ENCODE measurements at regions of chr15 and their contacts with region 1.

Region 1: DNA sequence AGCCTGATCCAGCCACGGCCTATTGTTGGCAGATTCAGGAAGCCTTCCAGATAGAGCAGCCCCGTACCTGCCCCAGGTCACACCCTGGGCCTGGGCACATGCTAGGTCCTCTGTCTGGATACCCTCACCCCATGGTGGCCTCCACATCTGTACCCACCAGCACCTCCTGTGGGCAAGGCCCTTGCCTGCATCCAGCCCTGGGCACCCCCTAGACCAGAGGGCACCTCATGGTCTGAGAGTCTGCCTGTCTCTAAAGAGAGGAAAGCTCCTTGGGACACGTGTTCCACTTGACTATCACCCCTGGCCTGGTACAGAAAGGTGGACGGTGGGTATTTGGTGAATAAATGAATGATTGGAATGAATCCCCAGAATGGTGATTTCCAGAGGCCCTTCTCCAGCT is 8.9 kb upstream of the COMMD4 start:
- DNase-seq: no peak
- H3K4me3 ChIP-seq: no peak overlapping the region
- H3K27ac ChIP-seq: no peak overlapping the region
- H3K4me1 ChIP-seq: no peaks in the 10 kb centered on the region
- H3K27me3 ChIP-seq: no peaks in the 10 kb centered on the region
- CTCF ChIP-seq: peak; percentile 25 to 47 (median 27); a peak in 2 of 4 replicates
- EP300 ChIP-seq: no peak
- POLR2A ChIP-seq: no peak
- RAD21 ChIP-seq: no peak

Region 2: GRCh38 chr15:75307778-75308391 is 19.1 kb before region 1 on chr15:
- CTCF ChIA-PET with region 1: interaction called, 12 read pairs
- POLR2A ChIA-PET with region 1: interaction called, 3 read pairs
- DNase-seq: peak; percentile 60 to 88
- H3K4me3 ChIP-seq: no peak overlapping the region
- H3K27ac ChIP-seq: no peak overlapping the region
- H3K4me1 ChIP-seq: no peaks in the 10 kb centered on the region
- H3K27me3 ChIP-seq: no peaks in the 10 kb centered on the region
- CTCF ChIP-seq: peak; percentile 94 to 95 (median 95)
- EP300 ChIP-seq: no peak
- POLR2A ChIP-seq: no peak
- RAD21 ChIP-seq: peak; percentile 98 to 99

Region 3: DNA sequence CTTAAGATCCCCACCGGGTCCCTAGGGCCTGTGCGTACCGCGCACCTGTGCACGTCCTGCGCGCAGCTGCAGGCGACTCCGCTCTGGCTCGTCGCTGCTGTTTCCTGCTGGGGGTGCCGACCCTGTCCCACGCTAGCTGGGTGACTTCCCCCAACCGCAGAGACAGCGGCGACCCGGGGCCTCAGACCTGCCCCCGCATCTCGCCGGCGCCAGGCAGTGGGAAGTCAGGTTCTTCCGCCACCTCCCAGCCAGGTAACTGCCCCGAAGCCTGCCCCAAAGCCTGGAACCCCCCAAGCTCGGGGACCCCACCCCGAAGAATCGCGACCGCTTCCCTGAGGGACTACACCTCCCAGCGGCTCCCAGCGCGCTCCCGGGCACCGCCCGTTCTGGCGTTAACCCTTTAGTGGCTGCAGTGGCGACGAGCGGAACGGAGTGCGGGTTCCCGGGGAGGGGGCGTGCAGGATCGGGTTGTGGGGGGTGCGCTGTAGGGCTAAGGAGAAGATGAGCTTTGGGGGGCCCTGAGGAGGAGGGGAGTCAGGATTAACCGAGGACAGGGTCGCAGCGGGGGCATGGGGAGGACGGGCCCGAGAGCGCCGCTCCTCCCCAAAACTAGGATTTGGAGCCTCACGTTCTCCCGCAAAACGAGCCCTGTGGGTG is 20.3 kb after region 1 on chr15:
- CTCF ChIA-PET with region 1: no interaction called
- POLR2A ChIA-PET with region 1: no interaction called
- DNase-seq: peak in 1 of 2 experiments; percentile 87
- H3K4me3 ChIP-seq: peak overlapping the region; percentile 63 to 87 (median 76)
- H3K27ac ChIP-seq: no peak overlapping the region
- H3K4me1 ChIP-seq: peaks cover 0 to 9% (median 5%) of the 10 kb centered on the region in 4 experiments; a peak in 4 of 7 replicates
- H3K27me3 ChIP-seq: peaks cover 0 to 31% (median 16%) of the 10 kb centered on the region in 4 experiments; a peak in 5 of 7 replicates
- CTCF ChIP-seq: no peak
- EP300 ChIP-seq: no peak
- POLR2A ChIP-seq: no peak
- RAD21 ChIP-seq: no peak